ENCODE measurements at regions of chr11 and their contacts with region 1.

Region 1: GRCh38 chr11:43920598-43921419 is 21.6 kb upstream of the C11orf96 start:
- DNase-seq: no peak
- ATAC-seq: no peak
- H3K4me3 Mint-ChIP-seq: no peak overlapping the region
- H3K27ac Mint-ChIP-seq: peak overlapping the region; percentile 63; the same call in 1 of the 2 replicates
- H3K4me1 Mint-ChIP-seq: peaks cover 8% of the 10 kb centered on the region
- H3K27me3 Mint-ChIP-seq: no peaks in the 10 kb centered on the region
- CTCF ChIP-seq: no peak

Region 2: GRCh38 chr11:43933608-43934551 is 13.1 kb after region 1 on chr11:
- CTCF ChIA-PET with region 1: interaction called, 12 read pairs
- POLR2A ChIA-PET with region 1: no interaction called
- DNase-seq: no peak
- ATAC-seq: peak; percentile 15; the same call in 1 of the 2 replicates
- H3K4me3 Mint-ChIP-seq: no peak overlapping the region
- H3K27ac Mint-ChIP-seq: no peak overlapping the region
- H3K4me1 Mint-ChIP-seq: peaks cover 6% of the 10 kb centered on the region
- H3K27me3 Mint-ChIP-seq: peaks cover 4% of the 10 kb centered on the region; the same call in 1 of the 2 replicates
- CTCF ChIP-seq: no peak

Measured in WTC11 (cell line).